PC-9 (cell line): ENCODE measurements at regions of chr5 and their contacts with region 1.

Region 1: GRCh38 chr5:142740474-142741242 is 29.5 kb upstream of the ARHGAP26 start:
- DNase-seq: peak; percentile 46 to 97
- H3K4me3 ChIP-seq: no peak overlapping the region
- H3K27ac ChIP-seq: peak overlapping the region; percentile 77
- H3K4me1 ChIP-seq: peaks cover 35% of the 10 kb centered on the region
- H3K27me3 ChIP-seq: no peaks in the 10 kb centered on the region
- CTCF ChIP-seq: no peak

Region 2: DNA sequence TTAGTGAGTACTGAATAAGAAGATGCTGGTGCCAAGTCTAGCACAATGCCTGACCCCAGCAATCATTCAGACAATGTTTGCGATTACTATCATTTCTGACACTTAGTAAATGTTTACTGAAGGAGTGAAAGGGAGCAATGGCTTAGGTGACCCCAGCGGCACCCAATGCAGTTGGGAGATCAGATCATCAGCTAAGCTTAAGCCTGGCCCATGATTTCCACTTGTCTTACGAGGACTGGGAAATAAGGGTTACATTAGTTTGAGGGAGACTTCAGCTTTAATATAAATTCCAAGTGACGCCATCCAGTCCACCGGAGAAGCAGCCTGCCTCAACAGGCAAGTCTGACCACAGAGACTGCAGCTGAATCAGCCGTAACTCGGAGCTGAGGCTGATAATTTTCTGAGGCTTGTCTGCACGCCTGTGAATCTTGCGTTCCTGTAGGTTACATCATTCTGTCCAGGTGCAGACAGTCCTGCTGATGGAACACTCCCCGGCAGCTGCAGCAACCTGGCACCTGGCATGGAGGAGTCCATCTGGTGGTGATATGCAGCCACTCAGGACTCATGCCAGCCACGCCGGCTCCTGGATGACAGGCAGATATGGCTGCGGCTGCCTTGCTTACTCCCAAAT is 19.9 kb before region 1 on chr5:
- CTCF ChIA-PET with region 1: no interaction called
- POLR2A ChIA-PET with region 1: interaction called, 4 read pairs
- intact Hi-C with region 1: loop called (anchors 2 kb)
- DNase-seq: peak; percentile 57 to 96
- H3K4me3 ChIP-seq: peak overlapping the region; percentile 27; the same call in 1 of the 2 replicates
- H3K27ac ChIP-seq: peak overlapping the region; percentile 80
- H3K4me1 ChIP-seq: peaks cover 64% of the 10 kb centered on the region
- H3K27me3 ChIP-seq: no peaks in the 10 kb centered on the region
- CTCF ChIP-seq: peak; percentile 40; the same call in 1 of the 2 replicates

Region 3: DNA sequence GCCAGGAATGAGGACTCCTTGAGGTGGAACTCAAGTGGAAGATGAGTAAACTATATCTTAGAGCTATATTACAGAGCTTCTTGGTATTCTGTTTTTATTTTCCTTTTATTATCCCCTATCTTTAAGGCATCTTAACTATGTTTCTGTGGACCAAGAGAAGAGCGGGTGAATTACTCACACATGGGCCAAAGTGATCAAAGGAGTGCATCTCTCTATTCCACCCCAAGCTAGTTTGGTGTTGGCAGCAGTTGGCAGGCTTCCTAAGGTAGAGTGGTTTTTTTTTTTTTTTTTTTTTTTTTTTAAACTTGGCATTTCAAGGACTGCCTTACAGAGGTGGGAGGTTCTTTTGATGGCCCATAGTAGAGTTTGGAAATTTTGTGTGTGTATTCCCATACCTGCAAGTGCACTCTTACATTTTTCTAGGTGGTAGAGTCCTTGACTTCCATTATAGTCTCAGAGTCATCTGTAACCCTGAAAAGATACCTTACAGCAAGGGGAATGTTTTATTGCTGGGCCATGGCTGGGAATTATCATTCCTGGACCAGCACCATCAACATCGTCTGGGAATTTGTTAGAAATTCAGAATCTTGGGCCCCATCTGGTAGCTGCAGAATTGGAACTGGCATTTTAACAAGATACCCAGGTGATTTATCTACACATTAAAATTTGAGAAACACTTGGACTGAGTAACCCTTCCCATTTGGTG is 80.5 kb after region 1 on chr5:
- CTCF ChIA-PET with region 1: interaction called, 17 read pairs
- POLR2A ChIA-PET with region 1: no interaction called
- intact Hi-C with region 1: no loop called
- DNase-seq: no peak
- H3K4me3 ChIP-seq: no peak overlapping the region
- H3K27ac ChIP-seq: peak overlapping the region; percentile 87
- H3K4me1 ChIP-seq: peaks cover 100% of the 10 kb centered on the region
- H3K27me3 ChIP-seq: no peaks in the 10 kb centered on the region
- CTCF ChIP-seq: no peak

Region 4: DNA sequence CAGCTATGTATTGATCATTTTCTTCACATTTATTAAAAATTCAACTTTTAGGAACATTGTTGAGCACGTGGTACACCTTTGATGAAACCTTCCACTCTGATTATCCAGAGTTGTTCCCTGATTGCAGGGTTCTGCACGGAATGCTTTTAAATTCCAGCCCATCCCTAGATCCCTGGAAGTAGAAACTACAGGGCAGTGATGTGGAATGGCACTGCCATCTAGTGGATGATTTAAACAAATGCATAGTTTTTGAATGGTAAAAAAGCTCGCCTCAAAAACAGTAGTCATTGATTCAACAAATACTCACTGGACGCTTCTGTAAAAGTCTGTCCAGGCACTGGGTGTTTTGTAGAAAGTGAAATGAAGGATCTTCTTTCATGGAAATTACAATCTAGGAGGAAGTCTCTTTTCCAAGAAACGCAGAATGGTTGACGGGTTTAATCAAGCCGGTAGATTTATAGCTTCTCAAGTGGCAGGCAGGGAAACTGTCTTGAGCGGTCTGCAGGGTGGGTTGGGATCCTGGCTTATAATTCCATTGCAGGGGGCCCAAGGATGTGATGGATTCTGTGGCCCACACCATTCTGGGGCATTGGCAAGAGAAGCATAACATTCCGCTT is 147.9 kb after region 1 on chr5:
- CTCF ChIA-PET with region 1: no interaction called
- POLR2A ChIA-PET with region 1: no interaction called
- intact Hi-C with region 1: no loop called
- DNase-seq: peak; percentile 28 to 50
- H3K4me3 ChIP-seq: no peak overlapping the region
- H3K27ac ChIP-seq: no peak overlapping the region
- H3K4me1 ChIP-seq: peaks cover 28% of the 10 kb centered on the region
- H3K27me3 ChIP-seq: no peaks in the 10 kb centered on the region
- CTCF ChIP-seq: peak; percentile 83

Region 5: DNA sequence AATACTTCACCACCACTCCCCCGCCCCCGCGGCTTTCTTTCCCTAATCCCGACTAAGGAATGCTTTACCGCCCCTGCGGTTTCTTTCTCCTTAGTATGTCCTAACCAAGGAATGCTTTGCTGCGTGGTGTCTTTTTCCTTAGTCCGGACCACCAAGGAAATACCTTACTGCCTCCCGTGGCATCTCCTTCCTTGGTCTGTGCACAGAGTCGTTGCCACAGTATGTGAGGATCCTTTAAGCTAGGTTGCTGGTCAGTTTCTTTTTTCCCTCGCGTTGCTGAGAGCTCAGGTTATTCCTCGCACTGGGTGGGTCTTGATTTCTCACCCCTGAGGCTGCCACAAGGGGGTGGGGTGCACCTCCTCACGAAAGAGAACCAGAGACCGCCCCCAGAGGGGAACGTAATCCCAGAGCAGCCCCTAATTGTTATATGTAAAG is 353.4 kb after region 1 on chr5:
- CTCF ChIA-PET with region 1: no interaction called
- POLR2A ChIA-PET with region 1: no interaction called
- intact Hi-C with region 1: no loop called
- DNase-seq: no peak
- H3K4me3 ChIP-seq: no peak overlapping the region
- H3K27ac ChIP-seq: no peak overlapping the region
- H3K4me1 ChIP-seq: no peaks in the 10 kb centered on the region
- H3K27me3 ChIP-seq: no peaks in the 10 kb centered on the region
- CTCF ChIP-seq: no peak